Activated T-helper 1 cell treated with anti-CD3 and anti-CD28 coated beads, Interleukin-12 subunit alpha, Interleukin-12 subunit beta, Interleukin-2, Interleukin-4 antibody, amounts not matched to agents 30 ng/mL and 10 ng/mL and 1 ng/mL, durations not matched to agents 14 hours and 24 hours and 36 hours (primary cell): ENCODE measurements at regions of chr2 and their contacts with region 1.

Region 1: GRCh38 chr2:44120428-44120827 is 48.2 kb upstream of the PPM1B start:
- DNase-seq: peak; percentile 1
- H3K4me3 Mint-ChIP-seq: no peak overlapping the region
- H3K27ac Mint-ChIP-seq: no peak overlapping the region
- H3K4me1 Mint-ChIP-seq: peaks cover 6% of the 10 kb centered on the region
- H3K27me3 Mint-ChIP-seq: peaks cover 2% of the 10 kb centered on the region

Region 2: GRCh38 chr2:44191739-44192138 is 71.3 kb after region 1 on chr2:
- intact Hi-C with region 1: loop called (anchors 2 kb)
- DNase-seq: no peak
- H3K4me3 Mint-ChIP-seq: no peak overlapping the region
- H3K27ac Mint-ChIP-seq: peak overlapping the region; percentile 79
- H3K4me1 Mint-ChIP-seq: peaks cover 32% of the 10 kb centered on the region
- H3K27me3 Mint-ChIP-seq: no peaks in the 10 kb centered on the region

Region 3: GRCh38 chr2:44572196-44572900 is 451.9 kb after region 1 on chr2:
- intact Hi-C with region 1: no loop called
- DNase-seq: no peak
- H3K4me3 Mint-ChIP-seq: no peak overlapping the region
- H3K27ac Mint-ChIP-seq: no peak overlapping the region
- H3K4me1 Mint-ChIP-seq: peaks cover 13% of the 10 kb centered on the region
- H3K27me3 Mint-ChIP-seq: peaks cover 2% of the 10 kb centered on the region